CD4-positive, alpha-beta T cell (primary cell): ENCODE measurements at regions of chr7 and their contacts with region 1.

Region 1: DNA sequence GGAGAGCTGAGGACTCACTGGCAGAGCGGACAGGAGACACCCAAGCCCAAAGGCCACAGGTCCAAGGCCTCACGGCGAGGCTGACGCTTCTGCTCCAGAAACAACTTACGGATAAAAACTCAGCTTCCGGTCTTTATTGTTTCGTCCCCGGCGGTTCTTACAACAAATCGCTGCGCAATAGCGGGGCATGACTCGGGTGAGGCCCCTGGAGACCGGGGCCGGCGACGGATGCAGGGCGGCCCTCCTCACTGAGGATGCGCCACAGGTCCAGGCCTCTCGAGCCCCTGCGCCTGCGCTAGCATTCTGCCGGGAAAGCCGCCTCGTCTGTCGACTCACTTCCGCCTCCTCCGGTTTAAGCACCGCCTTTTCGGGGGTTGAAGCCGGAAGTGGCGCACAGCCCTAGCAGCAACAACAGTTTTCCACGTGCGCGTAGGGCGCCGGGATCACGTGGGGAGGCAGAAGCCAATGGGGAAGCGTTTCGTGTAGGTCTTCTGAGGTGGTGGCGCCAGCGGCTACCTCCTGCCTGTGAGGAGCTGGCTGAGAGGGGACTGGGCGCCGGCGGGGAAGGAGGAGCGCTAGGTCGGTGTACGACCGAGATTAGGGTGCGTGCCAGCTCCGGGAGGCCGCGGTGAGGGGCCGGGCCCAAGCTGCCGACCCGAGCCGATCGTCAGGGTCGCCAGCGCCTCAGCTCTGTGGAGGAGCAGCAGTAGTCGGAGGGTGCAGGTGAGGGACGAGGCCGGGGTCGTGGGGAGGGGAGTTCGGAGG is at the starts of genes DNAJB9 and THAP5:
- DNase-seq: peak; percentile 97 to 100 (median 99)
- ATAC-seq: peak; percentile 82
- H3K4me3 ChIP-seq: peak within 1 kb of the TSS; percentile 78
- H3K4me3 Mint-ChIP-seq: peak within 1 kb of the TSS; percentile 93
- H3K27ac ChIP-seq: peak within 1 kb of the TSS; percentile 98 to 99
- H3K27ac Mint-ChIP-seq: peak within 1 kb of the TSS; percentile 99
- H3K4me1 ChIP-seq: peaks cover 16% of the 10 kb centered on the region
- H3K4me1 Mint-ChIP-seq: peaks cover 81% of the 10 kb centered on the region
- H3K27me3 ChIP-seq: no peaks in the 10 kb centered on the region
- H3K27me3 Mint-ChIP-seq: no peaks in the 10 kb centered on the region
- CTCF ChIP-seq: no peak
- total RNA-seq, gene DNAJB9: 66.5 to 72.1 TPM
- total RNA-seq, gene THAP5: 11.7 to 12.6 TPM

Region 2: DNA sequence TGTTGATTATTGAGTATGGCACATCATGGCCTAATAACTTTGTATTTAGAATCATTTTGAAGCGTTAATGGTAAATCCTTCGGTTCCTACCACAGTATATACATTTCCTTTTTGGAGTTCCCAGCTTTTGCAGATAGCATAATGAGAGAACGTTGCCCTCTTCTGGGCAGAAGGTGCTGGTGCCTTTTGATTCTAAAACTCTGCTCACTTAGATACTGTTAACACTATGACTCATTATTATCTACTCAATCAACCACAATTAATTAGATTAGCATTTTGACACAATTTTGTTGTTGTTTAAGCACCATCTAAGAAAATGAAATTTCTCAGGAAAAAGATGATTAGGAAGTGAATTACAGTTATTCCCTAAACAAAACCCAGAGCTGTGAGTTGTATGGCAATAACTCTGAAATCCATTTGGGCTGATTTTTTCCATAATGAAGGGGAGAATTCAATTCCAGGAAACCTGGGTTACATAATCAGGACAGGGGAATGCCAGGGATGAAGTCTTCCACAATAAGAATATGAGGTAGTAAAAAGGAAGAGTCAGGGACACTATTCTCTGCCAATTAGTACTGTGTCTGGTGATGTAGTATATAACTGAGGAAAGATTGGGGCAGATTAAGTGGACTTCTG is 690.0 kb before region 1 on chr7:
- CTCF ChIA-PET with region 1: no interaction called
- POLR2A ChIA-PET with region 1: no interaction called
- intact Hi-C with region 1: no loop called
- DNase-seq: peak in 6 of 14 experiments; percentile 9 to 79 (median 58)
- ATAC-seq: peak; percentile 74
- H3K4me3 ChIP-seq: no peak overlapping the region
- H3K4me3 Mint-ChIP-seq: no peak overlapping the region
- H3K27ac ChIP-seq: no peak overlapping the region
- H3K27ac Mint-ChIP-seq: no peak overlapping the region
- H3K4me1 ChIP-seq: peaks cover 4% of the 10 kb centered on the region
- H3K4me1 Mint-ChIP-seq: peaks cover 36% of the 10 kb centered on the region
- H3K27me3 ChIP-seq: peaks cover 0 to 5% of the 10 kb centered on the region in 2 experiments
- H3K27me3 Mint-ChIP-seq: peaks cover 18% of the 10 kb centered on the region
- CTCF ChIP-seq: peak; percentile 72

Region 3: DNA sequence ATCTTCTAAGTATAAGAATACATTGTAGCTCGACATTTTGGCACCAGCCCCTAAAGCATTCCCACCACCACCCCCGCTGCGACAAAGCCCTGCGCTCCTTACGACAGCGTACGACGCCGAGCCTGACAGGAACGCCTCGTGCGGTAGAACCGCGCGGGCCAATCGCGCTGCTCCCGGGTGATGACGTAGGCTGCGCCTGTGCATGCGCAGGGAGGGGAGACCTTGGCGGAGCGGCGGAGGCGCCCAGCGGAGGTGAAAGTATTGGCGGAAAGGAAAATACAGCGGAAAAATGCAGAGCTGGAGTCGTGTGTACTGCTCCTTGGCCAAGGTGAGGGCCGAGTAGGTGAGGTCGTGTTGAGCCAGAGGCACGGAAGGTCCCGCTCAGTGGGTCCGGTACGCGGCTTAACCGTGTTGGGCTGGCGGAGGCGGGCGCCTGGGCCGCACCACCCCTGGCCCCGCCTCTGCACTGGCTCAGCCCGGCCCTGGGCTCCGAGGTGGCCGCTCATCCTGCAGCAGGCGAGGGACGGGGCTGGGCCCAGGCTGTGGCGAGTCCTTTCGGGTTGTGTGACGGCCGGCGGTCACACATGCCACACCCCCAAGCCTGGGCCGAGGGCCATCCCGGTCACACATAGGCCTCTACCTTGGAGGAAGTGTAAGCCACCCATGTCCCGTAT is 678.5 kb before region 1 on chr7 and contains the start of gene DLD:
- CTCF ChIA-PET with region 1: no interaction called
- POLR2A ChIA-PET with region 1: no interaction called
- intact Hi-C with region 1: loop called in 1 of 2 experiments (anchors 5 kb)
- DNase-seq: peak; percentile 84 to 97 (median 90)
- ATAC-seq: peak; percentile 96
- H3K4me3 ChIP-seq: peak within 1 kb of the TSS; percentile 78
- H3K4me3 Mint-ChIP-seq: peak within 1 kb of the TSS; percentile 99
- H3K27ac ChIP-seq: peak within 1 kb of the TSS; percentile 85 to 89
- H3K27ac Mint-ChIP-seq: peak within 1 kb of the TSS; percentile 95
- H3K4me1 ChIP-seq: peaks cover 27% of the 10 kb centered on the region
- H3K4me1 Mint-ChIP-seq: peaks cover 54% of the 10 kb centered on the region
- H3K27me3 ChIP-seq: no peaks in the 10 kb centered on the region
- H3K27me3 Mint-ChIP-seq: no peaks in the 10 kb centered on the region
- CTCF ChIP-seq: no peak
- total RNA-seq, gene DLD: 74.3 to 74.9 TPM

Region 4: GRCh38 chr7:108146070-108146837 is 423.3 kb before region 1 on chr7:
- CTCF ChIA-PET with region 1: no interaction called
- POLR2A ChIA-PET with region 1: no interaction called
- intact Hi-C with region 1: no loop called
- DNase-seq: peak in 8 of 14 experiments; percentile 1 to 62 (median 31)
- ATAC-seq: no peak
- H3K4me3 ChIP-seq: no peak overlapping the region
- H3K4me3 Mint-ChIP-seq: no peak overlapping the region
- H3K27ac ChIP-seq: no peak overlapping the region
- H3K27ac Mint-ChIP-seq: no peak overlapping the region
- H3K4me1 ChIP-seq: peaks cover 3% of the 10 kb centered on the region
- H3K4me1 Mint-ChIP-seq: no peaks in the 10 kb centered on the region
- H3K27me3 ChIP-seq: peaks cover under 1 to 6% of the 10 kb centered on the region in 2 experiments
- H3K27me3 Mint-ChIP-seq: peaks cover 9% of the 10 kb centered on the region
- CTCF ChIP-seq: peak; percentile 67

Region 5: GRCh38 chr7:108525985-108526767 is 43.4 kb before region 1 on chr7 and contains the start of gene PNPLA8:
- CTCF ChIA-PET with region 1: interaction called, 6 read pairs
- POLR2A ChIA-PET with region 1: interaction called, 151 read pairs
- intact Hi-C with region 1: loop called (anchors 1 kb)
- DNase-seq: peak; percentile 99 to 100 (median 100)
- ATAC-seq: peak; percentile 88
- H3K4me3 ChIP-seq: peak within 1 kb of the TSS; percentile 88
- H3K4me3 Mint-ChIP-seq: peak within 1 kb of the TSS; percentile 91
- H3K27ac ChIP-seq: peak within 1 kb of the TSS; percentile 92 to 99
- H3K27ac Mint-ChIP-seq: peak within 1 kb of the TSS; percentile 96
- H3K4me1 ChIP-seq: peaks cover 21% of the 10 kb centered on the region
- H3K4me1 Mint-ChIP-seq: peaks cover 49% of the 10 kb centered on the region
- H3K27me3 ChIP-seq: no peaks in the 10 kb centered on the region
- H3K27me3 Mint-ChIP-seq: no peaks in the 10 kb centered on the region
- CTCF ChIP-seq: no peak
- total RNA-seq, gene PNPLA8: 85.9 to 88.6 TPM

Region 6: GRCh38 chr7:108559253-108559652 is 10.3 kb before region 1 on chr7:
- CTCF ChIA-PET with region 1: no interaction called
- POLR2A ChIA-PET with region 1: interaction called, 10 read pairs
- intact Hi-C with region 1: no loop called
- DNase-seq: no peak
- ATAC-seq: no peak
- H3K4me3 ChIP-seq: no peak overlapping the region
- H3K4me3 Mint-ChIP-seq: no peak overlapping the region
- H3K27ac ChIP-seq: no peak overlapping the region
- H3K27ac Mint-ChIP-seq: no peak overlapping the region
- H3K4me1 ChIP-seq: no peaks in the 10 kb centered on the region
- H3K4me1 Mint-ChIP-seq: no peaks in the 10 kb centered on the region
- H3K27me3 ChIP-seq: no peaks in the 10 kb centered on the region
- H3K27me3 Mint-ChIP-seq: no peaks in the 10 kb centered on the region
- CTCF ChIP-seq: no peak

Region 7: GRCh38 chr7:108605559-108606201 is 36.1 kb after region 1 on chr7:
- CTCF ChIA-PET with region 1: no interaction called
- POLR2A ChIA-PET with region 1: no interaction called
- intact Hi-C with region 1: no loop called
- DNase-seq: no peak
- ATAC-seq: no peak
- H3K4me3 ChIP-seq: no peak overlapping the region
- H3K4me3 Mint-ChIP-seq: no peak overlapping the region
- H3K27ac ChIP-seq: no peak overlapping the region
- H3K27ac Mint-ChIP-seq: no peak overlapping the region
- H3K4me1 ChIP-seq: no peaks in the 10 kb centered on the region
- H3K4me1 Mint-ChIP-seq: no peaks in the 10 kb centered on the region
- H3K27me3 ChIP-seq: peaks cover 0 to 5% of the 10 kb centered on the region in 2 experiments
- H3K27me3 Mint-ChIP-seq: peaks cover 5% of the 10 kb centered on the region
- CTCF ChIP-seq: no peak

Region 8: GRCh38 chr7:108629651-108630400 is 60.3 kb after region 1 on chr7:
- CTCF ChIA-PET with region 1: no interaction called
- POLR2A ChIA-PET with region 1: no interaction called
- intact Hi-C with region 1: no loop called
- DNase-seq: no peak
- ATAC-seq: no peak
- H3K4me3 ChIP-seq: no peak overlapping the region
- H3K4me3 Mint-ChIP-seq: no peak overlapping the region
- H3K27ac ChIP-seq: no peak overlapping the region
- H3K27ac Mint-ChIP-seq: no peak overlapping the region
- H3K4me1 ChIP-seq: no peaks in the 10 kb centered on the region
- H3K4me1 Mint-ChIP-seq: no peaks in the 10 kb centered on the region
- H3K27me3 ChIP-seq: peaks cover 0 to 6% of the 10 kb centered on the region in 2 experiments
- H3K27me3 Mint-ChIP-seq: peaks cover 21% of the 10 kb centered on the region
- CTCF ChIP-seq: no peak